PC-9 (cell line): ENCODE measurements at regions of chrX and their contacts with region 1.

Region 1: GRCh38 chrX:46408553-46409407 is 136.4 kb downstream of the ZNF674 start:
- DNase-seq: peak in 1 of 2 experiments; percentile 44
- H3K4me3 ChIP-seq: no peak overlapping the region
- H3K27ac ChIP-seq: 0 out of 2 replicates have a peak overlapping the region, but pooled peaks have one; percentile 32
- H3K4me1 ChIP-seq: no peaks in the 10 kb centered on the region
- H3K27me3 ChIP-seq: no peaks in the 10 kb centered on the region
- CTCF ChIP-seq: peak; percentile 75

Region 2: DNA sequence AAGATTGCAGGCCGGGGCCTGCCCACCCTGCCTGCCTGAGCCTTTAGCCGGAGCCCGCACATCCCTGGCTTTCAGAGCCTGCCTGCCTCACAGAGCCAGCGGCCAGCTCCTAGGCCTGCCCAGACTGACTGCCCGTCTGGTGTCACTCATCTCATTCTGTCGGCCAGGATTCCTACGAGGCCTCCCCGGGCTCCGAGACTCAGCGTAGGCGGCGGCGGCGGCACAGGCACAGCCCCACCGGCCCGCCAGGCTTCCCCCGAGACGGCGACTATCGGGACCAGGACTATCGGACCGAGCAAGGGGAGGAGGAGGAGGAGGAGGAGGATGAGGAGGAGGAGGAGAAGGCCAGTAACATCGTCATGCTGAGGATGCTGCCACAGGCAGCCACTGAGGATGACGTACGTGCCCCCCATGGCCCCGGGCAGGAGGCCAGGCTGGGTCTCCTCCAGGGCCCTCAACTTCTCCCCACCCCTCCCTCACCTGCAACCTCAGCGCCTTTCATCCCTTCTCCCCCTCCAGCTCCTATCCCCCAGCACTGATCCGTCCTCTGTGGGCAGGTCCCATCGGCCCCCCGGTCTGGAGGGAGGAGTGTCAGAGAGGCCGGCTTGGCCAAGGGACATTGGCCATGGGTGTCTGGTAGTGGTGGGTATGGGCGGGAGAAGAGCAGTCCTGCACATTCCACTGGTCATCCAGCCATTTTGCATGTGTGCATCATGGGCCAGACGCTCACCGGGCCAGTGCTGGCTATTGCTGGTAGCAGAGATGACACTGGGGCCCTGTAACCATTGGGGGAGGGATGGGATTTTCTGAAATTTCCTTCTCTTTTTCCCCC is 762.3 kb after region 1 on chrX:
- CTCF ChIA-PET with region 1: interaction called, 11 read pairs
- POLR2A ChIA-PET with region 1: no interaction called
- intact Hi-C with region 1: no loop called
- DNase-seq: no peak
- H3K4me3 ChIP-seq: no peak overlapping the region
- H3K27ac ChIP-seq: no peak overlapping the region
- H3K4me1 ChIP-seq: no peaks in the 10 kb centered on the region
- H3K27me3 ChIP-seq: no peaks in the 10 kb centered on the region
- CTCF ChIP-seq: no peak